ENCODE measurements at regions of chr11 and their contacts with region 1.

Region 1: DNA sequence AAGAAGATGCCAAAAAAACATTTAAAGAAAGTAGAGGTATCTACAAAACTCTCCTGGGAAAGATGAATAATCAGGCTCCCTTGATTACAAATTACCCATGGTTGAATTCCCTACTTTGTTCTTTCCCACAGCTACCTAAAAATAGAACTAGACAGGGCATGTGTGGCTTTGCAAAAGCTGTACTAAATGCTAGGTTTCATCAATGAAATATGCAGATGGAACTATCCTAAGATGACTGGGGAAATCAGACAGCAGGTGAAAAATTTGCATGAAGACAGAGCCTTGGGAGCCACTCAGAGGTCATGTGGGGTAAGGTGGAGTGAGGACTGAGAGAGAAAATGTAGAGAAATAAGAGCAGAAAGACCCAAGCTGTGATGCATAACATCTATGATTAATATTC is 14.7 kb downstream of the LAYN start:
- DNase-seq: peak; percentile 95
- H3K4me3 ChIP-seq: no peak overlapping the region
- H3K27ac ChIP-seq: peak overlapping the region; percentile 95
- H3K4me1 ChIP-seq: peaks cover 25% of the 10 kb centered on the region
- H3K27me3 ChIP-seq: no peaks in the 10 kb centered on the region
- CTCF ChIP-seq: peak in 1 of 2 donors; percentile 28

Region 2: DNA sequence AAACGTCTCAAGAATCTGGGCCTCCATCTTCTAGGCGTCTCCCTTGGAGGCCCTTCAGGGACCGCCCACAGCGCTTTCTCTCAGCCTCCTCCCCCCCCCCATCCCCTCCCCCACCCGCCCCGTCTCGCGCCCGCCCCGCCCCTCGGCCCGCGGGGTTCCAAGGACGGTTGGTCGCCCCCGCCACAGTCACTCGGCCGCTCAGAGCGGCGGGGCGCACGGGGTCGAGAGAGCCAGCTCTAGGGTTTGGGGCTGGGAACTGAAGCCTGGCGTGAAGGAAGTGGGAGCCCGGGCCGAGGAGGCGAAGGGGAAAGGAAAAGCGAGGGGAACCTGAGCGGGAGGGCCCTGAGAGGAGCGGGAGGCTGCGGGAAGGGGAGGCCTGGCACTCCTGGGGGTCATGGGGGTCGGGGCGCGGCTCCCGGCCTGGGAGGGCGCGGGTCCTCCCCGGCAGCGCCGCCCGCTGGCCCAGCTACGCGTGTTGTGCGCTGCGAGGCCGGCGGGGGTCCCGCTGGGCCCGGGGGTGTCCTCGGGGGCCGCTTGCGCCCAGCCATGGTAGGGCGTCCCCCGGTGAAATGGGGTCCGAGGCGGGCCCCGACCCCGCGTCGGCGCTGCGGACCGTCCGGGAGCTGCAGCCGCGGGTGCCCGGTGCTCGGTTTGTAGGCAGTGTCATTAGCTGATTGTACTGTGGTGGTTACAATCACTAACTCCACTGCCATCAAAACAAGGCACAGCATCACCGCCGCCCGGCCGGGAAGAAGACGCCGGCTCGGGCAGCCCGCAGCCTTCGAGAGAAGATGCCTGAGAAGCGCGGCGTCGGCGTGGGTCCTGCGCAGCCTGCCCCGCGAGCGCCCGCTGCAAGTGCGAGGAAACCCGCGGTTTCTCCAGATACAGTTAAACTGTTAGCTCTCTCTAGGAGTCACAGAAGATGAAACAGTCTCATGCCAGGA is 42.7 kb before region 1 on chr11 and contains the start of gene BTG4:
- CTCF ChIA-PET with region 1: no interaction called
- dilution Hi-C with region 1: no loop called
- in situ Hi-C with region 1: no loop called
- intact Hi-C with region 1: loop called (anchors 1 kb)
- DNase-seq: no peak
- H3K4me3 ChIP-seq: peak within 1 kb of the TSS; percentile 43 to 52 (median 43)
- H3K27ac ChIP-seq: peak within 1 kb of the TSS; percentile 99
- H3K4me1 ChIP-seq: peaks cover 36% of the 10 kb centered on the region
- H3K27me3 ChIP-seq: no peaks in the 10 kb centered on the region
- CTCF ChIP-seq: no peak
- total RNA-seq, gene BTG4: not detected

Region 3: GRCh38 chr11:111531687-111532364 is 23.4 kb before region 1 on chr11:
- CTCF ChIA-PET with region 1: no interaction called
- dilution Hi-C with region 1: no loop called
- in situ Hi-C with region 1: no loop called
- intact Hi-C with region 1: loop called (anchors 2 kb)
- DNase-seq: peak; percentile 96
- H3K4me3 ChIP-seq: no peak overlapping the region
- H3K27ac ChIP-seq: peak overlapping the region; percentile 88
- H3K4me1 ChIP-seq: peaks cover 33% of the 10 kb centered on the region
- H3K27me3 ChIP-seq: no peaks in the 10 kb centered on the region
- CTCF ChIP-seq: no peak

Region 4: DNA sequence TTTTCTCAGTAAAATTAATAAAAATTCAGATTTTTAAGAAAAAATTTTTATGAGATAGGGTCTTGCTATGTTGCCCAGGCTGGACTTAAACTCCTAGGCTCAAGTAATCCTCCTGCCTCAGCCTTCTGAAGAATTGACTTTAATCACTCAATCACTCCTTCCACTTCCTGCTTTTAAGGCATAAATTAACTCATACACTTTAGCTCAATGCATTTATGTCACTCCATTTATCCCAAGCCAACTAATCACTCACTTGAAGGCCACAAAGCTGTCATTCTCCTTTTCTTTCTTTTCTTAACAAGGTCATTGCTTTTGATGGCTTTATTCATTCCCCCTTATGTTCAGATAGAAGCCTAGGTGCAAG is 315.2 kb after region 1 on chr11:
- CTCF ChIA-PET with region 1: no interaction called
- dilution Hi-C with region 1: no loop called
- in situ Hi-C with region 1: no loop called
- intact Hi-C with region 1: no loop called
- DNase-seq: no peak
- H3K4me3 ChIP-seq: peak overlapping the region; percentile 65 to 82 (median 70)
- H3K27ac ChIP-seq: peak overlapping the region; percentile 41
- H3K4me1 ChIP-seq: peaks cover 16% of the 10 kb centered on the region
- H3K27me3 ChIP-seq: no peaks in the 10 kb centered on the region
- CTCF ChIP-seq: no peak